ENCODE measurements at regions of chr7 and their contacts with region 1.

Region 1: GRCh38 chr7:16420649-16421332 is 547 bp downstream of the CRPPA start:
- DNase-seq: peak; percentile 84

Region 2: DNA sequence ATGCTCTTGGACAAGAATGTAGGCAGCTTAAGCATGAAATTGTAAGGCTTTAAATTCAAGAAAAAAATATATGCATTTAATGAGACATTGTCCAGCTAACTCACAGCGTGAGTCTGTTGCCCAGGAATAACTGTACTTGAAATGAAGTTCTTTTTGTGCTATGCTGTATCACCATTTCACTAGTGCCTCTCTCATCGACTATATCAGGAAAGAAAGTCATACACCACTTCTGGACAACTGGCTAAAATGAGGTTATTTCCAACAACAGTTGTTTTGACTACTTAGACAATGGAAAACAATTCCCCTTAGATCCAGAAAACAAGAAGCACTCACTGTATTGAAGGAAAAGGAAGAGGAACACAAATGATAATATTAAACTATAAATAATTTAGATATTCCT is 251.3 kb before region 1 on chr7:
- CTCF ChIA-PET with region 1: no interaction called
- POLR2A ChIA-PET with region 1: no interaction called
- DNase-seq: no peak

Region 3: DNA sequence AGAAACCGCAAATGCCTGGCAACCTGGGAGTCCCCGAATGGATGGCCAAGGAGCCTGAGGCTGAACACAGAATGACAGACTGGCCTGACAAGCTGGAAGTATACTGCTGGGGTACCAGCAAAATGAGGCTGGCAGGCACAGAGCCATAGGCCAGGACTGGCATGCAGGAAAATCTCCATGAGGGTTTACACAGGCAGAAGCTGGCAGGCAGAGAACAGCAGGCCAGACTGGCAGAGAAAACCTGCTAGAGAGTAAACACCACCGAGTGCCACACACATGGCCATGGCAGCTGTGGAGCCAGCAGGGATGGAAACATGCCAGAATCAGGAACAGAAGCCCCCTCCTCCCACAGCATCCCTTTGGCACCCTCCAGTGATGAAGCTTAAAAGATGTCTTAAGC is 62.9 kb before region 1 on chr7:
- CTCF ChIA-PET with region 1: no interaction called
- POLR2A ChIA-PET with region 1: no interaction called
- DNase-seq: no peak

Region 4: DNA sequence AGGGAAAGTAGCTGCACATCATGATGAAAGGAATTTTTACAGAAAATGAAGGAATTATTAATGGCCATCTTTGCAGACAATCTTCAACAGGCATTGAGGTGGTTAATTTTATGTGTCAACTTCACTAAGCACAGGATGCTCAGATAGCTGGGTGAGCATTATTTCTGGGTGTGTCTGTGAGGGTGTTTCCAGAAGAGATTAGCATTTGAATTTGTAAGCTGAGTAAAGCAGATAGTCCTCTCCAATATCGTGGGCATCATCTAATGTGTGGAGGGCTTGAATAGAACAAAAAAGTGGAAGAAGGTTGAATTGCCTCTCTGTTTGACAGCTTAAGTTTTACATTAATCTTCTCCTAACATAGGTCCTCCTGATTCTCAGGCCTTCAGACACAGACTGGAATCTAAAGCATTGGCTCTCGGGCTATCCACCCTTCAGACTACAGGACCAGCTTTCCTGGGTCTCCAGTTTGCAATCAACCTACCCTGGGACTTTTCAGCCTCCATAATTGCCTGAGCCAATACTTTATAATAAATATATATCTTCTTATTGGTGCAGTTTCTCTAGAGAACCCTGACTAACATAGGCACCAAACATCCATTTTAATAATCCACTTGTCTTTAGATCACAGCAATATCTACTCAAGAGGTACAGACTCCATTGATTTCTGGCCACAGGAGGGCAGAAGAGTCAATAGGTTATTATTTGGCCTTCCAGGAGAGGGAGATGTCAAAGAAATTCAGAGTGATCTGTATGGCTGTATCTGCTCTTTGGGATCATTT is 11.0 kb after region 1 on chr7:
- CTCF ChIA-PET with region 1: interaction called, 3 read pairs
- POLR2A ChIA-PET with region 1: interaction called, 13 read pairs
- DNase-seq: peak; percentile 28

Region 5: DNA sequence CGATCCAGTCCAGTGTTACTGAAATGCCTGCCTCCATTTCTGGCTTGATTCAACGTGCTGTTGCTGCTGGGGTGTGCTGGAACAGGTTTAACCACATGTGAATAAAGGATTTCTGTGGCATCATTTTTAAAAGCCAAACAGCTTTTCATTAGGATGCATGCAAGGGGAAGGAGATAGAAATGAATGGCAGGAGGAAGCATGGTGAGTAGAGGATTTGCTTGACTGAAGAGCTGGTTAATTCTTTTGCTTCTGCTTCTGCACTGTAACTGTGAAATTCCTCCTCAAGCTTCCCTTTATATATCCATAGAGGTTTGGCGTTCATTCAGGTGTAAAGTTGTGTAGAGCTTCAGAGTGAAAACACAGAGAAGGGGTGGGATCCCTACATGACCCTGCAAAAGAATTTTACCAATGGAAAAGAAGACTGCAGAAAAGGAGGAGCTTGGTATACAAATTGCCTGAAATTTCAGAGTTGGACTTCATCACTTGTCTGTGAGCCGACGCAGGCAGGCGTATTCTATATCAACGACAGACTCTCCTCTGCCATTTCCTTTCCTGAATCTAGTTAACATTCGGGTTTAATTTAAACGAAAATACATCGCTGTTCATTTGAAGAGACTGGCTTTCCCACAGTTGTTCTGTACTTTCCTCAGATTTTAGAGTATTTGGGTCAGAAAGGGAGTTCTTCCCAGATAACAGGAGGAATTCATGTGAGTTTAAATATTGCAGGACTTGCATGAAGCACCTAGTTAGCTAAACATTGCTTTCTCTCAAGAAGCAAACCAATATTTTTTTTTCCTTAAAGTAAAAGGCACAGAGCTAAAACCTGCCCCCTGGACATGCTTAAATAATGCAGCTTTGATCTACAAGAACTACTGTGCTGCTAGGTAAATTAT is 44.9 kb after region 1 on chr7 and contains the start of gene SOSTDC1:
- CTCF ChIA-PET with region 1: no interaction called
- POLR2A ChIA-PET with region 1: interaction called, 12 read pairs
- DNase-seq: peak; percentile 31

Region 6: DNA sequence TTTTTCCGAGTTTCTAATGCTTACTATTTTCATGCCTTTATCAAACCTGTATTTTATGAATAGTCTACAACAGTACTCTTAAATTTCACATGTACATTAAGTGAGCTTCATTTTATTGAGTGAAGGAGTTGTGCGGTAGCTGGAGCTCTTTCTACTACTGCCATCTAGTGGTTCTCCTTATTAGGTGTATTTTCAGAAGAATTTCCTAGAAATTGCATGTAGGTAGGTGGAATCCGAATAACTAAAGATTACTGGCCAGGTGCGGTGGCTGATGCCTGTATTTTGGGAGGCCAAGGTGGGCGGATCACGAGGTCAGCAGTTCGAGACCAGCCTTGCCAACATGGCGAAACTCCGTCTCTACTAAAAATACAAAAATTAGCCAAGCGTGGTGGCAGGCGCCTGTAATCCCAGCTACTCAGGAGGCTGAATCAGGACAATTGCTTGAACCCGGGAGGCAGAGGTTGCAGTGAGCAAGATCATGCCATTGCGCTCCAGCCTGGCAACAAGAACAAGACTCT is 144.2 kb after region 1 on chr7:
- CTCF ChIA-PET with region 1: interaction called, 3 read pairs
- POLR2A ChIA-PET with region 1: interaction called, 10 read pairs
- DNase-seq: peak; percentile 53

Region 7: DNA sequence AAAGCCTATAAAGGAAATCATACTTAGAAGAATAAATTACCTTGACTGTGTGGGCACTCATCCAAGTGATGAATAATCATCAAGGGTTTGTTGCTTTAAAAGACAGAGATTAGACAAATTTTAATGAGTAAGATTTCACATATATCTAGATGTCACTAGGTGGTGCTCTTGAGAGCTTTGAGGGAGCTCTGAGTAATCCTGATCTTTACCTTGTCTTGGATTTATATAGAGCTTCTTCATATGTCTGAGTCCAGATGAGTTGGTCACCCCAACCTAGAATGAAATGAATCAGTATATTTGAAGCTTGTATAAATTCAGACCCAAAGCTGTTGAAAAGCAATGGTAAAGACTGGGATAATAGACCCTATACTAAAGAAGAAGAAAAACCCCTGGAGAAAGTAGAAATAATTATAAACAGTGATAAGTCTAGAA is 380.3 kb after region 1 on chr7:
- CTCF ChIA-PET with region 1: no interaction called
- POLR2A ChIA-PET with region 1: no interaction called
- DNase-seq: peak; percentile 45